Prostate gland (tissue), 2 donors: ENCODE measurements at regions of chr4 and their contacts with region 1.

Region 1: DNA sequence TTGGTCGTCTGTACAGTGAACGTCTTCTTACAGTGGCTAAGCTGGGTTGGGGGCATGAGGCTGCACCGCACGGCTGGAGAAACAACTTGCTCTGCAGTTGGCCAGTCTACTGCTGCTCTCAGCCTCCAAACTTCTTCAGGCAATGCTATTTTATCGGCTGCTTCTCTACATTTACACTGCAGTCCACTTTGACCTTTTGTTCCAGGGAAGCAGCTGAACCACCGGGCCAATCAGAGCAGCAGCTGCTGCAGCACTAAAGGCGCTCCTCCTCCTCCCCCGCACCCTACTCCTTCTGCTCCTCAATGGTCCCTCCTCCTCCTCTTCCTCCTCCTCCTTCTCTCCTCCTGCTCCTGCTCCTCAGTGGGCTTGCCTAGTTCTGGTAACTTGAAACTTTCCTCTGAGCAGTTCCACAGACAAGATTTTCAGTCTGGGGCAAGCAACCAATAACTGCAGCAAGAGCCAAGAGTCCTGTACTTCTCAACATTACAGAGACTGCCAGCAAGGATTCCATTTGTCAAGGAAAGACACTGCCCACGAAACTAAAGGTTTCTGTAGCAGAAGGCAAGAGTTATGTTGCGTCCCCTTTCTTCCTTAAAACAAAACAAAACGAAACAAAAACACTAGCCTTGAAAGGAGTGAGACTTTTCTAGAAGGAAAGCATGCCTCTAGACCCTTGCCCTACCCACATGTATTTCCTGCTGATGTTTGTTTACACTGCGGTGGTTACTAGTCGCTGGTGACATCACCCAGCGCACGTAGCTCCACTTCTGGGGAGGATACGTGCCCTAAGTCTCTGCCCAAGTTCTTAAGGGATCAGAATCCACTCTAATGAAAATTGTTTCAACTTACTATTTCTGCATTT is 125.7 kb upstream of the NAP1L5 start:
- DNase-seq: peak; percentile 83
- H3K4me3 ChIP-seq: peak overlapping the region; percentile 31 to 41
- H3K27ac ChIP-seq: peak overlapping the region; percentile 84 to 92
- H3K4me1 ChIP-seq: no peaks in the 10 kb centered on the region
- H3K27me3 ChIP-seq: no peaks in the 10 kb centered on the region
- CTCF ChIP-seq: no peak
- POLR2A ChIP-seq: peak; percentile 83

Region 2: GRCh38 chr4:88523325-88524129 is 299.8 kb before region 1 on chr4 and contains the start of gene PYURF:
- intact Hi-C with region 1: loop called (anchors 10 kb)
- DNase-seq: peak; percentile 93
- H3K4me3 ChIP-seq: peak within 1 kb of the TSS; percentile 77 to 85
- H3K27ac ChIP-seq: peak within 1 kb of the TSS; percentile 89
- H3K4me1 ChIP-seq: peaks cover 6% of the 10 kb centered on the region
- H3K27me3 ChIP-seq: no peaks in the 10 kb centered on the region
- CTCF ChIP-seq: peak in 1 of 4 experiments; percentile 27
- POLR2A ChIP-seq: peak; percentile 94
- total RNA-seq, gene PYURF: 84.5 to 133 TPM

Region 3: GRCh38 chr4:89024051-89024675 is 200.9 kb after region 1 on chr4:
- intact Hi-C with region 1: loop called (anchors 2 kb)
- DNase-seq: peak; percentile 69
- H3K4me3 ChIP-seq: no peak overlapping the region
- H3K27ac ChIP-seq: no peak overlapping the region
- H3K4me1 ChIP-seq: no peaks in the 10 kb centered on the region
- H3K27me3 ChIP-seq: no peaks in the 10 kb centered on the region
- CTCF ChIP-seq: peak; percentile 67 to 93 (median 89)
- POLR2A ChIP-seq: no peak

Region 4: GRCh38 chr4:89110986-89111832 is 287.9 kb after region 1 on chr4 and contains the start of gene TIGD2:
- intact Hi-C with region 1: loop called (anchors 5 kb)
- DNase-seq: peak; percentile 85
- H3K4me3 ChIP-seq: peak within 1 kb of the TSS; percentile 74 to 75
- H3K27ac ChIP-seq: peak within 1 kb of the TSS; percentile 84 to 87
- H3K4me1 ChIP-seq: no peaks in the 10 kb centered on the region
- H3K27me3 ChIP-seq: no peaks in the 10 kb centered on the region
- CTCF ChIP-seq: peak; percentile 67 to 90 (median 77)
- POLR2A ChIP-seq: peak; percentile 77
- total RNA-seq, gene TIGD2: 8.6 to 8.7 TPM